Ascending aorta (tissue), 2 donors: ENCODE measurements at regions of chr6 and their contacts with region 1.

Region 1: DNA sequence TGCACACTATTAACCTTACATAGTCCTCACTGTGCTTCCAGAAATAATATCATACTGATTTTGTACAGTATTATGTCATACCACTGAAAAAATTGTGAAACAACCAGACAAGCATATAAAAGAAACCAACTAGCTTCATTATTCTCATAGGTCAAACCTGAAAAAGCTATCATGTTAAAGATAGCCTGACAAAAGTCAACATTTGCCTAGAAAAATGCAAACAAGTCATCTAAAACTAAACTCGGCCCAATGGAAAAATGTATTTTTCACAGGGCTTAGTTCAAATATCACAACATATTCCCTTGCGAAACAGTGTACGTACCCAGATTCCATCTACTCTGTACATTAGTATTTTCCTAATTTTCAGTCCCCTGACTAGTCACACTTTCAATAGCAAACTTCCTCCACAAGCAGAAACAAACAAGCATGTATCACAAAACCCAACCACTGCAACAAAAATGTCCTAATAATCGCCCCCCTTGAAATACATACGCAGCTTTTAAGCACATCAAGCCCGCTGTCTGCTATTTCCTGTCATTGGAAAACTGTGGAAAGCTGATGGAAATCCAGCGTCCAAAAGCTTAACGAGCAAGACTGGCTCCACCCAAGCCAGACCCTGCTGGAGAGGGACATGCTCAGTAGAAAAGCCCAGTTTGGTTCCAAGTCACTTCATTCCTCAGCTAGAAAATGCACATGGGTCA is 93.1 kb downstream of the EPB41L2 start:
- DNase-seq: no peak
- H3K4me3 ChIP-seq: peak overlapping the region; percentile 42 to 66
- H3K27ac ChIP-seq: peak overlapping the region; percentile 60 to 73
- H3K4me1 ChIP-seq: peaks cover 0 to 22% of the 10 kb centered on the region in 2 donors
- H3K27me3 ChIP-seq: no peaks in the 10 kb centered on the region
- CTCF ChIP-seq: no peak

Region 2: GRCh38 chr6:130900913-130901312 is 69.0 kb before region 1 on chr6:
- intact Hi-C with region 1: loop called (anchors 5 kb)
- DNase-seq: peak in 1 of 2 donors; percentile 71
- H3K4me3 ChIP-seq: no peak overlapping the region
- H3K27ac ChIP-seq: no peak overlapping the region
- H3K4me1 ChIP-seq: no peaks in the 10 kb centered on the region
- H3K27me3 ChIP-seq: no peaks in the 10 kb centered on the region
- CTCF ChIP-seq: no peak

Region 3: GRCh38 chr6:131001111-131001736 is 31.3 kb after region 1 on chr6:
- intact Hi-C with region 1: no loop called
- DNase-seq: no peak
- H3K4me3 ChIP-seq: peak overlapping the region; percentile 35 to 42
- H3K27ac ChIP-seq: no peak overlapping the region
- H3K4me1 ChIP-seq: peaks cover 0 to 14% of the 10 kb centered on the region in 2 donors
- H3K27me3 ChIP-seq: no peaks in the 10 kb centered on the region
- CTCF ChIP-seq: no peak

Region 4: DNA sequence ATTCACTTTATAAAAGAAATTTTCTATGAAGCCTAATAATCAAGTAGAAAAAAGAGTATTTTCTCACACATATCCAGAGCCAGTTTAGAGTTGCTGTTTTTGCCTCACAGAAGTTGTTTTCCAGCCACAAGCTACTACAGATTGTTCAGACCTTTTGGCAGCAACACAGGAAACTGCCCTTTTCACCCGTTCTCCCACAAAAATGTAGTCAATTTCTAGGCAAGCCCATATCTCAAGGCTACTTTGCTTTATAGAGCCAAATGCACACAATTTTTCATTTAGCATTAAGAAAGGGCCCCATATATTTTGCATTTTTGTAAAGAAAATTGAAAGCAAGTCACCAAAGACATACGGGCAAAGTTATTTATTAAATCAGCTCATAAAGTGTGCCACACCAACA is 43.6 kb after region 1 on chr6:
- intact Hi-C with region 1: loop called (anchors 5 kb)
- DNase-seq: no peak
- H3K4me3 ChIP-seq: peak overlapping the region; percentile 39
- H3K27ac ChIP-seq: peak overlapping the region; percentile 11 to 60
- H3K4me1 ChIP-seq: peaks cover 0 to 24% of the 10 kb centered on the region in 2 donors
- H3K27me3 ChIP-seq: no peaks in the 10 kb centered on the region
- CTCF ChIP-seq: no peak